A549 (cell line): ENCODE measurements at regions of chr12 and their contacts with region 1.

Region 1: DNA sequence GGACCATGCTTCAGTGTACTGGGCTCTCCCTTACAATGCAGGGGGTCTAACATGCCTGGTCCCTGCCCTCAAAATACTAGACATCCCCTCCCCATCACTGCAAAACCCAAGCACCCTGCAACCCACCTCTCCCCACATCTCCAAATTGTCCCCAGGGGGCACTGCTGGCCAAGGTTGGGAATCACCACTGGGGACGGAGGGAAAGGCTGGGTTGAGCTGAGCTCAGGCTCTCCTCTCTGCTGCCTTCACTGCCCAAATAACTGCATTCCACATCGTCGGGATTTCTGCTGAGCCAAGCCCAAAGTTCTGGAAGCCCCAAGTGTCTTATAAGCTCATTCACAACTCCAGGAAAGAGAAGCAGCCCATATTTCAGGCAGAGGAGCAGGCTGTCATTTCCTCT is 69.6 kb downstream of the NT5DC3 start:
- DNase-seq: peak; percentile 59 to 67
- ATAC-seq: peak; percentile 92 to 95
- H3K4me3 ChIP-seq: no peak overlapping the region
- H3K27ac ChIP-seq: no peak overlapping the region
- H3K4me1 ChIP-seq: 0 out of 3 replicates have a peak, but pooled peaks cover 3% of the 10 kb centered on the region
- CTCF ChIP-seq: peak; percentile 67
- EP300 ChIP-seq: no peak
- POLR2A ChIP-seq: no peak
- RAD21 ChIP-seq: peak; percentile 92 to 95

Region 2: GRCh38 chr12:103334466-103334865 is 437.0 kb before region 1 on chr12:
- CTCF ChIA-PET with region 1: no interaction called
- POLR2A ChIA-PET with region 1: no interaction called
- DNase-seq: no peak
- ATAC-seq: no peak
- H3K4me3 ChIP-seq: no peak overlapping the region
- H3K27ac ChIP-seq: no peak overlapping the region
- H3K4me1 ChIP-seq: no peaks in the 10 kb centered on the region
- CTCF ChIP-seq: no peak
- EP300 ChIP-seq: no peak
- POLR2A ChIP-seq: no peak
- RAD21 ChIP-seq: no peak

Region 3: DNA sequence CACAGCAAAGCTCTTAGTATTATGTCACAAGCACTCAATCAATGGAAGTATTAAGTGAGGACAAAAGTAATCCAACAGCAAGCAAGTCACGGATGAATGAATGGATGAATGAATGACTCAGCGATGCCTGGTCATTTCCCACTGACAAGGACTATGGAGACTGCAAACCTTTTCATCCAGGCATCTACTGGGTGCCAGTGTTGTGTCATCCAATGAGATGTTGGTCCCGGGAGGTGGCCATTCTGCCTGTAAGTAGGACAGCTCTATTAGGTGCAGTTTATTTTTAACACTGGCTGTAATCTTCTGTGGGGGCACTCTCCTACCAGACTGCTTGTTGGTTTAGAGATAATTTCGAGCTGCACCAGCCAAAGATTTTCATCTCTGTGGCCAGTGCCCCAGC is 145.0 kb before region 1 on chr12:
- CTCF ChIA-PET with region 1: interaction called, 13 read pairs
- POLR2A ChIA-PET with region 1: no interaction called
- DNase-seq: peak; percentile 67 to 88
- ATAC-seq: peak; percentile 97
- H3K4me3 ChIP-seq: no peak overlapping the region
- H3K27ac ChIP-seq: peak overlapping the region in 1 of 2 experiments; percentile 44; a peak in 1 of 6 replicates
- H3K4me1 ChIP-seq: 0 out of 3 replicates have a peak, but pooled peaks cover 4% of the 10 kb centered on the region
- CTCF ChIP-seq: peak; percentile 78
- EP300 ChIP-seq: no peak
- POLR2A ChIP-seq: no peak
- RAD21 ChIP-seq: peak; percentile 89 to 91

Region 4: DNA sequence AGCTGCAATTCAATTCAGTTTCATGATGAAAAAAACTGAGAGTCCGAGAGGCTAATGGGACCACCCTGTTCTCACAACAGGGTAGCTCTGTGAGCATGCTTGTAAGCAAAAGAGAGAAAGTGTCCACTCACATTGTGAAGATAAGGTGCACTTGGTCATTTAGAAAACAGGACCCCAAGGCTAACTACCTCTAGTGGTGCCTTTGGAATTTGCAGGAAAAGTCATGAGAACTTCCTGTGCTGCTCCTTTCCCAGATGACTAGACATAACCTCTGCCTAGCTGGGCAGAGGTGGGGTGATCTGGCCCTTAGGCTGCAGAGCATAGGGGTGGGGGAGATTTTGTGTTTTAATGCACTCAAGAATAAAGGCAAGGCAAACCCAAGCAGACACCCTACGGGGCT is 65.5 kb before region 1 on chr12:
- CTCF ChIA-PET with region 1: no interaction called
- POLR2A ChIA-PET with region 1: no interaction called
- DNase-seq: peak; percentile 28 to 55
- ATAC-seq: peak; percentile 80 to 90
- H3K4me3 ChIP-seq: no peak overlapping the region
- H3K27ac ChIP-seq: no peak overlapping the region
- H3K4me1 ChIP-seq: no peaks in the 10 kb centered on the region
- CTCF ChIP-seq: peak; percentile 22; the same call in 1 of the 3 replicates
- EP300 ChIP-seq: no peak
- POLR2A ChIP-seq: no peak
- RAD21 ChIP-seq: no peak

Region 5: GRCh38 chr12:103806803-103807202 is 35.3 kb after region 1 on chr12:
- CTCF ChIA-PET with region 1: interaction called, 15 read pairs
- POLR2A ChIA-PET with region 1: no interaction called
- DNase-seq: no peak
- ATAC-seq: no peak
- H3K4me3 ChIP-seq: no peak overlapping the region
- H3K27ac ChIP-seq: peak overlapping the region in 1 of 2 experiments; percentile 83; a peak in 3 of 6 replicates
- H3K4me1 ChIP-seq: peaks cover 46% of the 10 kb centered on the region
- CTCF ChIP-seq: no peak
- EP300 ChIP-seq: no peak
- POLR2A ChIP-seq: no peak
- RAD21 ChIP-seq: no peak

Region 6: GRCh38 chr12:103868215-103868614 is 96.7 kb after region 1 on chr12:
- CTCF ChIA-PET with region 1: interaction called, 80 read pairs
- POLR2A ChIA-PET with region 1: no interaction called
- DNase-seq: no peak
- ATAC-seq: no peak
- H3K4me3 ChIP-seq: no peak overlapping the region
- H3K27ac ChIP-seq: no peak overlapping the region; a peak in 1 of 6 replicates
- H3K4me1 ChIP-seq: no peaks in the 10 kb centered on the region
- CTCF ChIP-seq: no peak
- EP300 ChIP-seq: no peak
- POLR2A ChIP-seq: no peak
- RAD21 ChIP-seq: no peak

Region 7: DNA sequence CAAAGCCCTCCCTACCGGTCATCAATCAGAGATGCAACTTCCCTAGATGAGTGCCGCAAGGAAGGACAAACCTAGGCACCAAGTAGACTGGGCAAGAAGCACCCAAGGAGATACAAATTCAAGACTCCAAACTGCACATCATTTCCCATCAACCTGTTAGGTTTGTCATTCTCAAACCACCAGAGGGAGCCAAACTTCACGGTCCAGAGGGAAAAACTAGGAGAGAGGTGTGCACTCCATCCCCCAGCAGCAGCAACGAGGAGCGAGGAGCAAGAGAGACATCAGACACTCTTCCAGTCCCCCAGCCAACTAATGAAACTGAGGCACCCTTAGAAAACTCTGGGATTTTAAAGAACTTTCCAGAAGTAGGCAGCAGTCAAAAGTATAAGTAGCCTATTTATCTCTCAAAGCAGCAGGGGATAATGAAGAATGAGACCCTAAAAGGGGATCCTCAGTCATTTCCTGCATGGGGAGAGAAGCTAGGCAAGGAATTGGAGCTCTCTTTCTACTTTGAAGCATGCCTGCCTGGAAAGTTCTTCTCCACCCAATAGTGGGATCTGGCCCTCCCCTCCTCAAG is 106.6 kb after region 1 on chr12:
- CTCF ChIA-PET with region 1: interaction called, 15 read pairs
- POLR2A ChIA-PET with region 1: no interaction called
- DNase-seq: peak; percentile 80 to 82
- ATAC-seq: peak; percentile 93 to 96
- H3K4me3 ChIP-seq: no peak overlapping the region
- H3K27ac ChIP-seq: no peak overlapping the region
- H3K4me1 ChIP-seq: peaks cover 15% of the 10 kb centered on the region; the same call in 2 of the 3 replicates
- CTCF ChIP-seq: peak; percentile 84
- EP300 ChIP-seq: no peak
- POLR2A ChIP-seq: no peak
- RAD21 ChIP-seq: peak; percentile 75 to 91